ENCODE measurements at regions of chr6 and their contacts with region 1.

Region 1: GRCh38 chr6:37018198-37019064 is 13.0 kb downstream of the FGD2 start:
- DNase-seq: peak; percentile 82 to 92 (median 86)
- H3K4me3 ChIP-seq: no peak overlapping the region
- H3K4me3 Mint-ChIP-seq: peak overlapping the region in 4 of 8 donors; percentile 4 to 57 (median 28)
- H3K27ac ChIP-seq: peak overlapping the region; percentile 18
- H3K27ac Mint-ChIP-seq: peak overlapping the region; percentile 31 to 91 (median 88)
- H3K4me1 ChIP-seq: peaks cover 48% of the 10 kb centered on the region
- H3K4me1 Mint-ChIP-seq: peaks cover 37 to 49% (median 42%) of the 10 kb centered on the region in 4 donors
- H3K27me3 ChIP-seq: no peaks in the 10 kb centered on the region
- H3K27me3 Mint-ChIP-seq: no peaks in the 10 kb centered on the region

Region 2: DNA sequence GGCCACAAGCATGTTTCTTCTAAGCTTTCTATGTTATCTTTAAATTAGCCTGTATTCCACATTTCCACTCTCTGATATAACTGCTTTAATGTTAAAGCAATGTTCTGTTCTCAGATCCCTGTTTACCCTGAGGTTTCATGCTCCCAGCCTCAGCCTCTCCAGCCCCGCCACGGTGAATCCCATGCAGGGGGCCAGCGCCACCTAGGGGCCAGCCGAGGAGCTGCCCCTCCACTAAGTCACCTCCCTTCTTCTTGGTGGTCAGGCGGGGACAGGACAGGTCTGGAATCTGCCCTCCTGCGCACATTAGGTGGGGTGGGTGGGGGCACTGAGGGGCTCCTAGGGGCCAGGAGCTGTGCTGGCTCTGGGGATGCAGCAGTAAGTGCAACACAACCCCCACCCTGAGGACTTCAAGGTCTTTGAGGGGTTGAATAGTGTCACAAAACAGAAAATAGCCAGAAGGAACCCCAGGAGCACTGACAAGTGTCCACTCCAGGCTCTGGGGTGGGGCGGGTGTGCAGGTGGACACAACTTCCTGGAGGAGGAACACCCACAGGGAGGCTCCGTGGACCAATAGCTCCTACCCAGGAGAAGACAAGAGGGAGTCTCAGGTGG is 259.2 kb before region 1 on chr6:
- CTCF ChIA-PET with region 1: interaction called, 119 read pairs
- POLR2A ChIA-PET with region 1: interaction called, 3 read pairs
- intact Hi-C with region 1: no loop called
- DNase-seq: peak; percentile 71 to 77 (median 76)
- H3K4me3 ChIP-seq: no peak overlapping the region
- H3K4me3 Mint-ChIP-seq: peak overlapping the region in 1 of 8 donors; percentile 47
- H3K27ac ChIP-seq: no peak overlapping the region
- H3K27ac Mint-ChIP-seq: peak overlapping the region; percentile 37 to 96 (median 86)
- H3K4me1 ChIP-seq: peaks cover 43% of the 10 kb centered on the region
- H3K4me1 Mint-ChIP-seq: peaks cover 39 to 50% (median 44%) of the 10 kb centered on the region in 4 donors
- H3K27me3 ChIP-seq: no peaks in the 10 kb centered on the region
- H3K27me3 Mint-ChIP-seq: no peaks in the 10 kb centered on the region

Region 3: DNA sequence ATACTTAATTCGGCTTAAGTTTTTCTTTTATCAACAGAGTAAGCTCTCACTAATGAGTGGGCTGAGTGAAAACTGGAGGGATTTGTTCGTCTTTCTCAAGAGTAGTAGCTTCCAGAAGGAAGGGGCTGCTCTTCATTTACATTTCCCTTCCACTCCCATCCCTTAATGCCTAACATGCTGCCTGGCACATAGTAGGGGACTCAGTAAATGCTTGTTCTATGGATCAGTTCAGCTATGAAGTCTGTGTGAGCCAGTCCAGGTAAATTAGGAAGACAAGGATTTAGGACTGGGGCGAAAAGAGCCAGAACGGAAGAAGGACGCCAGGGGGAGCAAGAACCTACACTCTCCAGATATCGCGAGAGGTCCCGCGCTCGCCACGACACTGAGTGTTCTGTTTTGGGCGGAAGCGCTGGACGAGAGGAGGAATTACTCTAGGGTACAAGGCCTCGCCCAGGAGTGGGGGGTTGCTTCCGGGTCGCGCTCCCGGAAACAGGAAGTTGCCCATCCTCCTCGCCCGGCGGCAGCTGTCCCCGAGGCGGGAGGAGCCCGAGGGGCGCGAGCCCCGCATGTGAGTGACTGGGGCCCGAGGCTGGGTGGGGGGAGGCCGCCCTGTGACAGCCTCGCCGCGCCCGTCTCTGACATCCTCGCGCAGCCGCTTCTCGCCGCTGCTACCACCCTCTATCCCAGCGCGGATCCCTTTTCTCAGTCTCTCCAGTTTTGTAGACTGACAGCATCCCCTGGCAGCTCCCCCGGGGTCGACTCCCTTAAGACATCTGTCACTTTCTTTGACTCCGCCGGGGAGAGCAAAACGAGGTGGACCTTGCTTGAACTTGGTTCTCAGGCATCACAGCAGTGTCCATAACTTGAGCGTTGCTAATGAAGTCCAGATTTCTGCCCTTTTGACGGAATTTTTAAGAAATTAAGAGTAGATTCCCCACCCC is 132.7 kb before region 1 on chr6 and contains the start of gene C6orf89:
- CTCF ChIA-PET with region 1: interaction called, 188 read pairs
- POLR2A ChIA-PET with region 1: interaction called, 61 read pairs
- intact Hi-C with region 1: loop called (anchors 1 kb)
- DNase-seq: peak; percentile 95 to 98 (median 97)
- H3K4me3 ChIP-seq: peak within 1 kb of the TSS; percentile 71 to 84
- H3K4me3 Mint-ChIP-seq: peak within 1 kb of the TSS; percentile 82 to 93 (median 90)
- H3K27ac ChIP-seq: peak within 1 kb of the TSS; percentile 85
- H3K27ac Mint-ChIP-seq: peak within 1 kb of the TSS; percentile 94 to 98 (median 96)
- H3K4me1 ChIP-seq: peaks cover 50% of the 10 kb centered on the region
- H3K4me1 Mint-ChIP-seq: peaks cover 23 to 51% (median 39%) of the 10 kb centered on the region in 4 donors
- H3K27me3 ChIP-seq: no peaks in the 10 kb centered on the region
- H3K27me3 Mint-ChIP-seq: no peaks in the 10 kb centered on the region
- total RNA-seq, gene C6orf89: 53.0 to 56.0 TPM

Region 4: DNA sequence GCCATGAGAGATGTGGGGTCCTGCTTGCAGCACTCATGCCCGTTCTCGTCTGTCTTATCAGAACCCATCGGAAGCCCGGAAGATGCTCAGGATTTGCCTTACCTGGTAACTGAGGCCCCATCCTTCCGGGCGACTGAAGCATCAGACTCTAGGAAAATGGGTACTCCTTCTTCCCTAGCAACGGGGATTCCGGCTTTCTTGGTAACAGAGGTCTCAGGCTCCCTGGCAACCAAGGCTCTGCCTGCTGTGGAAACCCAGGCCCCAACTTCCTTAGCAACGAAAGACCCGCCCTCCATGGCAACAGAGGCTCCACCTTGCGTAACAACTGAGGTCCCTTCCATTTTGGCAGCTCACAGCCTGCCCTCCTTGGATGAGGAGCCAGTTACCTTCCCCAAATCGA is 55.6 kb before region 1 on chr6:
- CTCF ChIA-PET with region 1: interaction called, 10 read pairs
- POLR2A ChIA-PET with region 1: interaction called, 4 read pairs
- intact Hi-C with region 1: no loop called
- DNase-seq: peak; percentile 83 to 90 (median 85)
- H3K4me3 ChIP-seq: no peak overlapping the region
- H3K4me3 Mint-ChIP-seq: peak overlapping the region; percentile 49 to 87 (median 71)
- H3K27ac ChIP-seq: peak overlapping the region; percentile 55
- H3K27ac Mint-ChIP-seq: peak overlapping the region; percentile 90 to 98 (median 94)
- H3K4me1 ChIP-seq: peaks cover 55% of the 10 kb centered on the region
- H3K4me1 Mint-ChIP-seq: peaks cover 33 to 64% (median 50%) of the 10 kb centered on the region in 4 donors
- H3K27me3 ChIP-seq: no peaks in the 10 kb centered on the region
- H3K27me3 Mint-ChIP-seq: no peaks in the 10 kb centered on the region

Region 5: GRCh38 chr6:37005061-37005810 is 13.2 kb before region 1 on chr6 and contains the start of gene FGD2:
- CTCF ChIA-PET with region 1: interaction called, 39 read pairs
- POLR2A ChIA-PET with region 1: no interaction called
- intact Hi-C with region 1: no loop called
- DNase-seq: no peak
- H3K4me3 ChIP-seq: peak within 1 kb of the TSS in 1 of 2 donors; percentile 37
- H3K4me3 Mint-ChIP-seq: peak within 1 kb of the TSS; percentile 59 to 87 (median 82)
- H3K27ac ChIP-seq: peak within 1 kb of the TSS; percentile 28
- H3K27ac Mint-ChIP-seq: peak within 1 kb of the TSS; percentile 0 to 92 (median 85)
- H3K4me1 ChIP-seq: peaks cover 17% of the 10 kb centered on the region
- H3K4me1 Mint-ChIP-seq: peaks cover 9 to 25% (median 17%) of the 10 kb centered on the region in 4 donors
- H3K27me3 ChIP-seq: no peaks in the 10 kb centered on the region
- H3K27me3 Mint-ChIP-seq: no peaks in the 10 kb centered on the region
- total RNA-seq, gene FGD2: 1.4 to 1.5 TPM

Region 6: GRCh38 chr6:37169496-37170272 is 151.3 kb after region 1 on chr6 and contains the start of gene PIM1:
- CTCF ChIA-PET with region 1: interaction called, 627 read pairs
- POLR2A ChIA-PET with region 1: interaction called, 394 read pairs
- intact Hi-C with region 1: loop called (anchors 1 kb)
- DNase-seq: peak; percentile 94 to 98 (median 95)
- H3K4me3 ChIP-seq: peak within 1 kb of the TSS; percentile 76 to 97
- H3K4me3 Mint-ChIP-seq: peak within 1 kb of the TSS; percentile 93 to 99 (median 94)
- H3K27ac ChIP-seq: peak within 1 kb of the TSS; percentile 74
- H3K27ac Mint-ChIP-seq: peak within 1 kb of the TSS; percentile 94 to 98 (median 96)
- H3K4me1 ChIP-seq: peaks cover 36% of the 10 kb centered on the region
- H3K4me1 Mint-ChIP-seq: peaks cover 23 to 54% (median 29%) of the 10 kb centered on the region in 4 donors
- H3K27me3 ChIP-seq: no peaks in the 10 kb centered on the region
- H3K27me3 Mint-ChIP-seq: no peaks in the 10 kb centered on the region
- total RNA-seq, gene PIM1: 124 to 125 TPM

Region 7: GRCh38 chr6:37222125-37222967 is 203.9 kb after region 1 on chr6:
- CTCF ChIA-PET with region 1: interaction called, 1,184 read pairs
- POLR2A ChIA-PET with region 1: no interaction called
- intact Hi-C with region 1: no loop called
- DNase-seq: peak; percentile 54 to 80 (median 63)
- H3K4me3 ChIP-seq: peak overlapping the region; percentile 55 to 94
- H3K4me3 Mint-ChIP-seq: peak overlapping the region; percentile 85 to 91 (median 88)
- H3K27ac ChIP-seq: no peak overlapping the region
- H3K27ac Mint-ChIP-seq: peak overlapping the region in 5 of 7 donors; percentile 30 to 79 (median 52)
- H3K4me1 ChIP-seq: peaks cover 7% of the 10 kb centered on the region
- H3K4me1 Mint-ChIP-seq: peaks cover 7 to 13% (median 9%) of the 10 kb centered on the region in 4 donors
- H3K27me3 ChIP-seq: no peaks in the 10 kb centered on the region
- H3K27me3 Mint-ChIP-seq: peaks cover 0 to 2% of the 10 kb centered on the region in 2 donors

Region 8: GRCh38 chr6:37576336-37576813 is 557.9 kb after region 1 on chr6:
- CTCF ChIA-PET with region 1: no interaction called
- POLR2A ChIA-PET with region 1: no interaction called
- intact Hi-C with region 1: no loop called
- DNase-seq: no peak
- H3K4me3 ChIP-seq: no peak overlapping the region
- H3K4me3 Mint-ChIP-seq: no peak overlapping the region
- H3K27ac ChIP-seq: no peak overlapping the region
- H3K27ac Mint-ChIP-seq: no peak overlapping the region
- H3K4me1 ChIP-seq: no peaks in the 10 kb centered on the region
- H3K4me1 Mint-ChIP-seq: no peaks in the 10 kb centered on the region
- H3K27me3 ChIP-seq: no peaks in the 10 kb centered on the region
- H3K27me3 Mint-ChIP-seq: peaks cover 0 to 2% of the 10 kb centered on the region in 2 donors